Ovary (tissue), 10 donors: ENCODE measurements at regions of chr19 and their contacts with region 1.

Region 1: DNA sequence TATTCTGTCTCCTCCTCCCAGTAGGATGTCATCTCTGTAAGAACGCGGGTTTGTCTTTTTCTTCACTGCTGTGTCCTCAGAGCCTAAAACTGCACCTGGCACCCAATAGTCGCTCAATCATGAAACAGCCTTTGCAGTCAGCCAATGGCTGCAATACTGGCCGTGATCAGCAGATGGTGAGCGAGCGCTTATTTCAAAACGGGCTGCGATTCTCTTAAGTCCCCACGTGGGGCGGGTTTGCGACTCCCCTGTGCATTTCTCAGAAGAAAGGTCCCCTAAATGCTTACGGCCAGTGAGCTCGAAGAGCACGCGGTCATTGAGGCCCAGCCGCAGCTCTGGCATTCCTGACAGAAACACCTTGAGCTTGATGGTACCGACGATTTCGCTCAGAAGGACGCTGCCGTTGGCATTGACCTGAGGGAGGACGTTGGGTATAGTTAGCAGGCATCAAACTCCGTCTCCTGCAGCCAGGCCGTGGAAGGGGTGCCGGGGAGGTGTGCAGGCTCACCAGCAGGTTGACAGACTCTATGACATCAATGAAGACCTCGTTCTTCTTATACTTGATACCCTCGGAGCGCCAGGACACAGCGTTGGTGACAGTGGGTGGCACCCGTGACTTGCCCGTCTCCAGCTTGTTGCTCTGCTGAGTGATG is 6.0 kb downstream of the AP1M2 start:
- DNase-seq: peak; percentile 77 to 91 (median 89)
- H3K4me3 ChIP-seq: no peak overlapping the region
- H3K27ac ChIP-seq: no peak overlapping the region
- H3K4me1 ChIP-seq: no peaks in the 10 kb centered on the region
- H3K27me3 ChIP-seq: no peaks in the 10 kb centered on the region
- CTCF ChIP-seq: peak; percentile 84 to 99 (median 98)
- EP300 ChIP-seq: no peak
- POLR2A ChIP-seq: no peak

Region 2: DNA sequence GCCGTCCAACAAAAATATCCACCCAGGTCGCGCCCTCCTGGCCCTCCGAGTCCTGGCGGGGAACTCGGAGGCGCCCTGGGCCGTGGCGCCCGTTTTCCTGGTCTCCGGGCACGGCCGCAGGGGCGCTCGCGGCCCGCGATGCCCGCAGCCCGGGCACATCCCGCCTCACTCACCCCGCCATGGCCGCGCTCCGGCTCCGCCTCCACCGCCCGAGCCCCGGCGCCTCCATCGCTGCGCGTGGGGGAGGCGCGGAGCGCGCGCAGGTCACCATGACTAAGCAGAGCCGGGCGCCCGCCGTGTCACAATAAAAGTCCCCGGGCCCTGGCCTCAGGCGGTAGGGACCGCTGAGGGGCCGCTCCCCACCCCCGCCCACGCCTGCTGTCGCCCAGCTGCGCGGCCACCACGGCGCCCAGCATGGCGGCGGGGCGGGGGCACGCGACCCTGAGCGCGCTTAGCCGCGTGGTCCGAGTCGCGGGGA is 78.5 kb before region 1 on chr19:
- intact Hi-C with region 1: no loop called
- DNase-seq: peak; percentile 91 to 94 (median 93)
- H3K4me3 ChIP-seq: peak overlapping the region; percentile 98
- H3K27ac ChIP-seq: peak overlapping the region; percentile 83 to 90
- H3K4me1 ChIP-seq: peaks cover 3% of the 10 kb centered on the region
- H3K27me3 ChIP-seq: no peaks in the 10 kb centered on the region
- CTCF ChIP-seq: peak in 1 of 3 donors; percentile 24
- EP300 ChIP-seq: no peak
- POLR2A ChIP-seq: peak; percentile 61

Region 3: GRCh38 chr19:10514211-10515145 is 66.6 kb before region 1 on chr19:
- intact Hi-C with region 1: no loop called
- DNase-seq: no peak
- H3K4me3 ChIP-seq: no peak overlapping the region
- H3K27ac ChIP-seq: no peak overlapping the region
- H3K4me1 ChIP-seq: peaks cover 3% of the 10 kb centered on the region
- H3K27me3 ChIP-seq: peaks cover 4% of the 10 kb centered on the region
- CTCF ChIP-seq: no peak
- EP300 ChIP-seq: no peak
- POLR2A ChIP-seq: no peak

Region 4: GRCh38 chr19:10644260-10645007 is 63.3 kb after region 1 on chr19:
- intact Hi-C with region 1: loop called (anchors 1 to 2 kb)
- DNase-seq: peak; percentile 80 to 90 (median 88)
- H3K4me3 ChIP-seq: no peak overlapping the region
- H3K27ac ChIP-seq: peak overlapping the region in 1 of 2 donors; percentile 16
- H3K4me1 ChIP-seq: no peaks in the 10 kb centered on the region
- H3K27me3 ChIP-seq: no peaks in the 10 kb centered on the region
- CTCF ChIP-seq: peak; percentile 72 to 87 (median 83)
- EP300 ChIP-seq: no peak
- POLR2A ChIP-seq: peak; percentile 10

Region 5: DNA sequence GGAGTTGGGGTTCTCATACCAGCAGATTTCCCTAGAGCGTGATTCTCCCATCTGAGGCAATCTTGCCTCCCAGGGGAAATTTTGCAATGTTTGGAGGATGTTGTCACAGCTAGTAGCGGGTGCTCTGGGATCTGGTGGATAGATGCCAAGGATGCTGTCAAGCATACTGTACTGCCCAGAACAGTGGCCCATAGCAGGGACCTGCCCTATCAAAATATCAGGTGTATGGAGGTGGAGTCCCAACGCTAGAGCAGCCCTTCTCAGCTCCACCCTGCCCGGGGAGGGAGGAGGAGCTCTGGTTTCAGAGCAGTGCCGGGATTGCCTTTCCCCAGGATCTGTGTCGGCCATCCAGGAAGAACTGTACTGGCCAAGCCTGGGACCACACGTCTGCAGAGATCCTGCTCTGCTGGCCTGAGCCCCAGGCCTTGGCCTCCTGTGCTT is 109.3 kb after region 1 on chr19:
- intact Hi-C with region 1: loop called in 1 of 4 experiments (anchors 5 kb)
- DNase-seq: peak in 2 of 5 donors; percentile 30 to 72
- H3K4me3 ChIP-seq: no peak overlapping the region
- H3K27ac ChIP-seq: no peak overlapping the region
- H3K4me1 ChIP-seq: peaks cover 3% of the 10 kb centered on the region
- H3K27me3 ChIP-seq: no peaks in the 10 kb centered on the region
- CTCF ChIP-seq: no peak
- EP300 ChIP-seq: no peak
- POLR2A ChIP-seq: no peak